Natural killer cell (primary cell): ENCODE measurements at regions of chr2 and their contacts with region 1.

Region 1: GRCh38 chr2:201182650-201183364 is at the start of gene CASP10:
- DNase-seq: peak in 1 of 2 donors; percentile 87
- ATAC-seq: peak; percentile 75 to 83 (median 79)
- H3K4me3 ChIP-seq: peak within 1 kb of the TSS; percentile 59
- H3K4me3 Mint-ChIP-seq: peak within 1 kb of the TSS; percentile 97
- H3K27ac ChIP-seq: peak within 1 kb of the TSS; percentile 72
- H3K27ac Mint-ChIP-seq: peak within 1 kb of the TSS; percentile 97 to 98
- H3K4me1 ChIP-seq: peaks cover 28% of the 10 kb centered on the region
- H3K4me1 Mint-ChIP-seq: peaks cover 51 to 52% of the 10 kb centered on the region in 2 donors
- H3K27me3 ChIP-seq: no peaks in the 10 kb centered on the region
- H3K27me3 Mint-ChIP-seq: no peaks in the 10 kb centered on the region
- CTCF ChIP-seq: peak; percentile 57
- total RNA-seq, gene CASP10: 67.4 to 101 (median 75.3) TPM

Region 2: DNA sequence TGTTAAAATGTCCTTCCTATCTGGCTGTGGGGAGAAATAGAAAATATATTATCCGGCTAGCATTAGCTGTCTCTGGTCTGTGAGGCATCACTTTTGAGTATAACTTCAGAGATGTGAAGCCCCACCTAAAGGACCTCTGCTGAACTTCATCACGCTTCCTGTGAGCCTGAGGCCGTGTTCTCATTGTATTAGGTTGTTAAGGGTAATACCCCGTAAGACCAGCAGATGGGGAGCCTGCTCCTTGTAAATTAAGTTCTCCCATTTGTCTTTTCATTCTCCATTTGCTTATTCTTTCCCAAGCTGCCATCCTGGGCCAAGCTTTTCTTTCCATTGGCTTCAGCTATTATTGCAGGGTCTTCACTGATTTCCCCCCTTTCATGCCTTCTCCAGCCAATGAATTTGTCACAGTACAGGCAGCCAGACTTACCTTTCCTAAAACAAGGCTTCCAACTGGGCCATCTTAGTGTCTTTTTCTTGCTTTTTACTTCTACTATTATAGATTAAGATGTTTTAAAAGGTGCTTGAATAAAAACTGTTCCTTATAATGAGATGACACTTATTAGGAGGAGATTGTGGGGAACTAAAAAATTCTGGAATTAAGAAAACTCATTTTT is 281.2 kb before region 1 on chr2:
- intact Hi-C with region 1: loop called (anchors 1 kb)
- DNase-seq: peak; percentile 55 to 91
- ATAC-seq: peak; percentile 100
- H3K4me3 ChIP-seq: no peak overlapping the region
- H3K4me3 Mint-ChIP-seq: no peak overlapping the region
- H3K27ac ChIP-seq: peak overlapping the region; percentile 34
- H3K27ac Mint-ChIP-seq: peak overlapping the region; percentile 63
- H3K4me1 ChIP-seq: no peaks in the 10 kb centered on the region
- H3K4me1 Mint-ChIP-seq: peaks cover 6 to 8% of the 10 kb centered on the region in 2 donors
- H3K27me3 ChIP-seq: no peaks in the 10 kb centered on the region
- H3K27me3 Mint-ChIP-seq: no peaks in the 10 kb centered on the region
- CTCF ChIP-seq: peak; percentile 87

Region 3: GRCh38 chr2:201151127-201151981 is 31.5 kb before region 1 on chr2:
- intact Hi-C with region 1: no loop called
- DNase-seq: peak in 1 of 2 donors; percentile 19
- ATAC-seq: peak; percentile 71 to 87 (median 83)
- H3K4me3 ChIP-seq: no peak overlapping the region
- H3K4me3 Mint-ChIP-seq: peak overlapping the region; percentile 11
- H3K27ac ChIP-seq: peak overlapping the region; percentile 77
- H3K27ac Mint-ChIP-seq: peak overlapping the region; percentile 94 to 96
- H3K4me1 ChIP-seq: peaks cover 30% of the 10 kb centered on the region
- H3K4me1 Mint-ChIP-seq: peaks cover 55 to 56% of the 10 kb centered on the region in 2 donors
- H3K27me3 ChIP-seq: no peaks in the 10 kb centered on the region
- H3K27me3 Mint-ChIP-seq: no peaks in the 10 kb centered on the region
- CTCF ChIP-seq: no peak

Region 4: GRCh38 chr2:201194097-201194496 is 11.3 kb after region 1 on chr2:
- intact Hi-C with region 1: loop called (anchors 1 kb)
- DNase-seq: peak in 1 of 2 donors; percentile 49
- ATAC-seq: peak; percentile 72 to 82 (median 75)
- H3K4me3 ChIP-seq: no peak overlapping the region
- H3K4me3 Mint-ChIP-seq: peak overlapping the region; percentile 90
- H3K27ac ChIP-seq: peak overlapping the region; percentile 50
- H3K27ac Mint-ChIP-seq: peak overlapping the region; percentile 97 to 98
- H3K4me1 ChIP-seq: peaks cover 46% of the 10 kb centered on the region
- H3K4me1 Mint-ChIP-seq: peaks cover 70 to 73% of the 10 kb centered on the region in 2 donors
- H3K27me3 ChIP-seq: no peaks in the 10 kb centered on the region
- H3K27me3 Mint-ChIP-seq: no peaks in the 10 kb centered on the region
- CTCF ChIP-seq: no peak

Region 5: GRCh38 chr2:201208563-201209252 is 25.9 kb after region 1 on chr2:
- intact Hi-C with region 1: loop called (anchors 1 kb)
- DNase-seq: no peak
- ATAC-seq: peak in 1 of 3 donors; percentile 23
- H3K4me3 ChIP-seq: no peak overlapping the region
- H3K4me3 Mint-ChIP-seq: no peak overlapping the region
- H3K27ac ChIP-seq: peak overlapping the region; percentile 27
- H3K27ac Mint-ChIP-seq: peak overlapping the region in 1 of 2 donors; percentile 62
- H3K4me1 ChIP-seq: peaks cover 16% of the 10 kb centered on the region
- H3K4me1 Mint-ChIP-seq: peaks cover 30 to 37% of the 10 kb centered on the region in 2 donors
- H3K27me3 ChIP-seq: no peaks in the 10 kb centered on the region
- H3K27me3 Mint-ChIP-seq: no peaks in the 10 kb centered on the region
- CTCF ChIP-seq: no peak